ENCODE measurements at regions of chr16 and their contacts with region 1.

Region 1: DNA sequence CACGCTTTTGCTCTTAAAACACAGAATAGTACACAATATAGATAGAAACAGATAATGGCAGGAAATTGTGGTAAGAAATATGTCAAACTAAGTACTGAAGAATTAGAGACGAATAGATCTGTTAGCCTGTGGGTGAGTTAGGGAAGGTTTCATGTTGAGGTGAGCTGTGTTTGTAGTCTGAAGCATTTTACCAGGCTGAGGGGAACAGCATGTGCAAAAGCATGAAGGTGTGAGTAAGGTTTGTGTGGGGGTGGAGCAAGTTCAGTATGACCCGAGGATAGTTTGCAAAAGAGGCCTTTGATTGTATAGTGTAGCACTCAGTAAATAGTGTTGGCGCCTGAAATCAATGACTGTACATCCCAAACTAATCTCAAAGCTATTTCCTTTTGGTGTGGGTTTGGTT is 13.8 kb downstream of the IGSF6 start:
- DNase-seq: no peak
- ATAC-seq: no peak
- H3K4me3 ChIP-seq: no peak overlapping the region
- H3K4me3 Mint-ChIP-seq: no peak overlapping the region
- H3K27ac ChIP-seq: no peak overlapping the region
- H3K27ac Mint-ChIP-seq: no peak overlapping the region
- H3K4me1 ChIP-seq: peaks cover 0 to 8% of the 10 kb centered on the region in 2 donors
- H3K4me1 Mint-ChIP-seq: peaks cover 11% of the 10 kb centered on the region
- H3K27me3 ChIP-seq: no peaks in the 10 kb centered on the region
- H3K27me3 Mint-ChIP-seq: no peaks in the 10 kb centered on the region
- CTCF ChIP-seq: no peak

Region 2: DNA sequence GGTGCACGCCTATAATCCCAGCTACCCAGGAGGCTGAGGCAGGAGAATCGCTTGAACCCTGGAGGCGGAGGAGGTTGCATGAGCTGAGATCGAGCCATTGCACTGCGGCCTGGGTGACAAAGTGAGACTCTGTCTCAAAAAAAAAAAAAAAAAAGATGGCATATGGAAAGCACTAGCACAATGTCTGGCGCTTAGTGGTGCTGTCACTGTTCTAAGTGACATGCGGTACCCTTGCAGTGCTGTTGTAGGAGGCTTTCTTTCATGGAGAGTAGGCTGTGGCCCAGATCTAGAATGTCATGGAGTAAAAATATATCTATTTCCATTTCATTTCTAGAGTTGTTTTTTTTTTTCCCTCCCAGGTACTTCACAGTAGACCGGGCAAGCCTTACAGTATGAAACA is 53.8 kb before region 1 on chr16:
- CTCF ChIA-PET with region 1: interaction called, 66 read pairs
- POLR2A ChIA-PET with region 1: interaction called, 3 read pairs
- intact Hi-C with region 1: loop called (anchors 1 kb)
- DNase-seq: no peak
- ATAC-seq: no peak
- H3K4me3 ChIP-seq: no peak overlapping the region
- H3K4me3 Mint-ChIP-seq: no peak overlapping the region
- H3K27ac ChIP-seq: no peak overlapping the region
- H3K27ac Mint-ChIP-seq: no peak overlapping the region
- H3K4me1 ChIP-seq: peaks cover 0 to 9% of the 10 kb centered on the region in 2 donors
- H3K4me1 Mint-ChIP-seq: peaks cover 6% of the 10 kb centered on the region
- H3K27me3 ChIP-seq: no peaks in the 10 kb centered on the region
- H3K27me3 Mint-ChIP-seq: no peaks in the 10 kb centered on the region
- CTCF ChIP-seq: no peak

Region 3: DNA sequence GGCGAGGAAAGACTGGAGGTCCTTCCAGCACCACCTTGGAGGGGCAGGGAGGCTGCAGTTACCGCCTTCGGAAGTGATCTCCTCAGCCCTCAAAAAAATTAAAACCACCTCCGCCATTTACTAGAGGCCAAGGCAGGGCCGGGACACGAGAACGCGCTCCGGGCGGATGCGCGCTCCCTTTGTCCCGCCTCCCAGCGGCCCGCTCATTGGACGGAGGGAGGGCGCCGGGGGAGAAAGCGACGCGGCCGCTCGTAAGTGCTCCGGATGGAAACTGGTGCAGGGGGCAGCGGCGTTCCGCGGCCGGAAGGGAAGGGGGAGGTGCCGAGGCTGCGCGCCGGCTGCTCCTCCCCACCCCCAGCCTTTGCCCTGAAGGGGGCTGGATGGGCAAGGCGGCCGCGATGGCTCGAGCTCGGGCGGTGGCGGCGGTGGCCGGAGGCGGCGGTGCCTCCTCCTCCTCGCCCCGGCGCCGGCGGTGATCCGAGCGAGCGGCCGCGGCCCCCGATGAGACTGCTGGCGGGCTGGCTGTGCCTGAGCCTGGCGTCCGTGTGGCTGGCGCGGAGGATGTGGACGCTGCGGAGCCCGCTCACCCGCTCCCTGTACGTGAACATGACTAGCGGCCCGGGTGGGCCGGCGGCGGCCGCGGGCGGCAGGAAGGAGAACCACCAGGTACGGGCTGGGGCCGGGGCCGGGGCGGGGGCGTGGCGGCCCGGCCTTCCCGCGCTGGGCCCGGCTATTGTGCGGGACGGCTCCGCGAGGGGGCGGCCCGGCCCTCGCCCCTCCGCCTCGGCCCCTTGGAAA is 39.1 kb before region 1 on chr16 and contains the start of gene METTL9:
- CTCF ChIA-PET with region 1: interaction called, 15 read pairs
- POLR2A ChIA-PET with region 1: no interaction called
- intact Hi-C with region 1: no loop called
- DNase-seq: peak; percentile 97
- ATAC-seq: peak; percentile 89
- H3K4me3 ChIP-seq: peak within 1 kb of the TSS; percentile 70 to 95 (median 82)
- H3K4me3 Mint-ChIP-seq: peak within 1 kb of the TSS; percentile 88
- H3K27ac ChIP-seq: peak within 1 kb of the TSS; percentile 83 to 91
- H3K27ac Mint-ChIP-seq: peak within 1 kb of the TSS; percentile 94
- H3K4me1 ChIP-seq: peaks cover 13 to 17% of the 10 kb centered on the region in 2 donors
- H3K4me1 Mint-ChIP-seq: peaks cover 35% of the 10 kb centered on the region
- H3K27me3 ChIP-seq: no peaks in the 10 kb centered on the region
- H3K27me3 Mint-ChIP-seq: no peaks in the 10 kb centered on the region
- CTCF ChIP-seq: no peak
- total RNA-seq, gene METTL9: 57.3 and 57.7 TPM in 2 replicates

Region 4: DNA sequence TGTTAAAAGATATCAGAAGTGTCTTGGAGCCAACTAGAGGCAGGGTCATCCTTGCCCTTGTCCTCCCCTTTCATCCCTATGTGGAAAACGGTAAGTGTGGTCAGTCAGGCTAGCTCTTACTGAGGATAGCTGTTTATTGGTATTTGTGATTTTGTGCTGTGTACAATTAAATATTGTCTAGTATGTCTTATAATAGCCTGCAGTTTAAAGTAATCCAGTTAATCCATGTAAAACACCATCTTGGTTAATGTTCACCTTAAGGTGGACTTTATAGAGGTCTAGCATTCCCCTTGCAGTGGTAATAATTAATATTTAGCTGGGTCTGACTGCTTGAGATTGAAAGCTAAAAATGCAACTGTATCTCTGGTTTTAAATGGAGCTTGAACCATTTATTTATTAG is 13.5 kb before region 1 on chr16:
- CTCF ChIA-PET with region 1: interaction called, 11 read pairs
- POLR2A ChIA-PET with region 1: no interaction called
- intact Hi-C with region 1: no loop called
- DNase-seq: no peak
- ATAC-seq: no peak
- H3K4me3 ChIP-seq: no peak overlapping the region
- H3K4me3 Mint-ChIP-seq: no peak overlapping the region
- H3K27ac ChIP-seq: no peak overlapping the region
- H3K27ac Mint-ChIP-seq: no peak overlapping the region
- H3K4me1 ChIP-seq: no peaks in the 10 kb centered on the region
- H3K4me1 Mint-ChIP-seq: peaks cover 2% of the 10 kb centered on the region
- H3K27me3 ChIP-seq: no peaks in the 10 kb centered on the region
- H3K27me3 Mint-ChIP-seq: no peaks in the 10 kb centered on the region
- CTCF ChIP-seq: no peak

Region 5: DNA sequence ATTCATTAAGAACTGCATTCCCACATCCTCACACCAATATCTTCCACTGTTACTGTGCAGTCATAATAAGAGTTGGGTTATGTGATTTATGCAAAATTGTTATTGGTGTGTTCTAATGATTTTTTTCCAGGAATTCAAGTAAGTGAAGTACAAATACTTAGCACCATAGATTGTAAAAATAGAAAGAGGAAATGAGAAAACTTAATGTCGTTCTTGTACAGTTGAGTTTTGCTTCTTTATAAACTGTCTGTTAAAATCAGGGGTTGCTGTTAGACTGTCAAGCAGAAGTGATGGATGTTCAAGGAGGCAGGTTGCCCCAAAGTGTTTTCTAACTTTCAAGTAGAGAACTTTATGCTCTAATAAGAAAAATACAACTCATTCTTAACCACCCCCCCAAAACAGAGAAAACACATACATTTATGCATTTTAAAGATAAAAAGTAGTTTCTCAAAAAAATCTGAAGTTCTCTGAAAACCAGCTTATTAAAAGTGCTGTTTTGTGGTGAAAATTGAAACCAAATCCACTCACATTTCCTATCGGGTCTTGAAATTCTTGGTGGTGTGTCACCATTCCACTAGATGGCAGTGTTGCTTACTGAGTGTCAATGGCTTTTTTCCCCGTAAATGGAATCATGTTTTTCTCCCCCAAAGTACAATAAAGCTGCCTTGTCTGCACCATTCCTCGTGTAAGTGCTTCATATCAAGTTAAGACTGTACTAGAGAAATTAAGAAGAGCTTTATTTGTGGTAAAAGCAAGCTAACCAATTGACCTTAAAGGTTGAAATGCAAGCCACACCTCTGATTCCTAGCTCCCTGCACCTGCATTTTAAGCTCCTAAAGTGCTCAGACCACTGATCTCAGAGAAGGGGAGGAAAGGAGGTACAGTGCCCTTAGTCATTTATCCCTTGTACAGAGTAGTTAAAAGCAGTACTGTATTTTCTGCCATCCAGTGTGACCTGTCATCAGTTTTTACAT is 18.5 kb after region 1 on chr16:
- CTCF ChIA-PET with region 1: interaction called, 159 read pairs
- POLR2A ChIA-PET with region 1: no interaction called
- intact Hi-C with region 1: loop called (anchors 2 kb)
- DNase-seq: peak; percentile 81
- ATAC-seq: peak; percentile 82
- H3K4me3 ChIP-seq: peak overlapping the region in 3 of 5 experiments; percentile 0 to 47 (median 44)
- H3K4me3 Mint-ChIP-seq: peak overlapping the region; percentile 79
- H3K27ac ChIP-seq: peak overlapping the region; percentile 51 to 78
- H3K27ac Mint-ChIP-seq: peak overlapping the region; percentile 88
- H3K4me1 ChIP-seq: peaks cover 74 to 77% of the 10 kb centered on the region in 2 donors
- H3K4me1 Mint-ChIP-seq: peaks cover 82% of the 10 kb centered on the region
- H3K27me3 ChIP-seq: no peaks in the 10 kb centered on the region
- H3K27me3 Mint-ChIP-seq: no peaks in the 10 kb centered on the region
- CTCF ChIP-seq: peak; percentile 92